ENCODE measurements at regions of chr5 and their contacts with region 1.

Region 1: DNA sequence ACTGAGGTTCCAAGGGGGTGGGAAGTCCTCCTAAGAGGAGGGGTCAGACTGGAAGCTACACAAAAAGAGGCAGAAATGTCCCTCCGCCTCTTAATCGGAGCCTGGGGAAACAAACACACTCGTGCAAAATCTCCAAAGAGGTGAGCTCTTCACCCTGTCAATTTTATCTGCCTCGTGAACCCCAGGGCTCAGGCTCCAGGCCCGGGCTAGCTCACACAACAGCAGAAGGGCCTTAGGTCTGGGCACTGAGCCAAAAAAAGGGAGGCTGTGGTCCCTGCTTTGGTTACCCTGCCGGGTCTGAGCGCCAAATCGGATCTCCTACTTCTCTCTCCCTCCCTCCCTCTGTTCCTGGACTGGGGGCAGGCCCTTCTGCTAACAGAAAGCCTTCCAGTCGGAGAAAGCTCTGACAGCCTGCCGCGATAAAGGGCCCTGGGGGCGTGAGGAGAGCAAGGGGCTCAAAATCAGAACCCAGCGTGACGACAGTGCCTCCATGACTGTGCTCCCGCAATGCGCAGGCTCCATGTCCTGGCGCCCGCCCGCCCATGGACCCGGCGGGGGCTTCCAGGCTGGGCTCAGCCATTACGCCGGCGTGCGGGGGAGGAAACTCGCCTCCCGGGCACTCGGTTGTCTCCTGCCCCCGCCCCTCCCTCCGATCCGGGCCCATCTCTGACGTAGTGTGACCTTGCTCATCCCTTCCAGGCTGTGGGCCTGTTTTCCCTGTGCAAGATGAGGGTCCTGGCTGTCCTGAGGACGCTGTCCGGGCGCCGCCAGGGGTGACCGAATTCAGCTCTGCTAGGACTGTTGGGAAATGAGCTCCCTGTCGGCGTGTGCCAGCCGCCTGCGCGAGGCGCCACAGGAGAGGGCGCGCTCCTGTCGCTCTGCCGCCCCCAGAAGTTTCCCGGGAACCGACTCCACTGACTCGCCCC is 865 bp upstream of the SLC22A4 start:
- DNase-seq: peak; percentile 95
- H3K4me3 ChIP-seq: peak overlapping the region; percentile 31 to 61 (median 58)
- H3K27ac ChIP-seq: peak overlapping the region; percentile 92 to 100 (median 98)
- H3K4me1 ChIP-seq: peaks cover 0 to 27% (median 22%) of the 10 kb centered on the region in 4 donors
- H3K27me3 ChIP-seq: no peaks in the 10 kb centered on the region
- CTCF ChIP-seq: no peak
- EP300 ChIP-seq: peak in 1 of 4 donors; percentile 37
- POLR2A ChIP-seq: peak in 1 of 2 donors; percentile 34

Region 2: DNA sequence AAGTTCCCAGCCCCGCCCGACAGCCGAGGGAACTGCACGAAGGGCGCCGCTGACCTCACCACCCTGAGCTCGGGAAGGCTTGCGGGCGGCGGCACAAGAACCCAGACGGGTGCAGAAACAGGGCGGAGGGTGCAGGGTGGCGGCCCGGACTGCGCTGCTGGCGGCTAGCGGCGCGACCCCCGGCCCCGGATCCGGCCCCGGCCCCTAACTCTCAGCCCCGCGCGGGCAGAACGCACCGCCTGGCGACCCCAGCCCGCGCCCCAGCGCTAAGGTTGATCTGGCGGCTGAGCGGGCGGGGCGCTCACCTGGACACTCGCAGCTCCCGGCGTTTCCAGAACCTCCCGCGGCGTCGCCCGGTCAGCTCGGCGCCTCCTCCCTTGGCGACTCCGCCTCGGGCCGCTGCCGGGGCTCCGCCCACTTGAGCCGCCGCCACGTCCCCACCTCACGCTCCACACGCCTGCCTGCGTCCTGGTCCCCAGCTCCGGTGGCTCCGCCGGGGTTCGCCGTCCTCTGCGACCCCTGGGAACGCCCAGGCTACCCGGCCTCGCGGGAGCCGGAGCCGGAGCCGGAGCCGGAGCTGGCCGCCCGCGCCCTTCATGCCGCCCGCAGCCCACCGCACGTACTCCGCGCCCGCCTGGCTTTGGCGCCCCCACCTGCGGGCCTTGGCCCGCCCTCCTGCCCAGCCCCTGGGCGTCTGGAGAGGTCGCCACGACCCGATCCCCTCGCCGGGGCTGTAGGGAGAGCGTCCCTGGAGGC is 65.7 kb before region 1 on chr5 and contains the start of gene P4HA2:
- intact Hi-C with region 1: loop called (anchors 5 kb)
- DNase-seq: peak; percentile 93
- H3K4me3 ChIP-seq: peak within 1 kb of the TSS; percentile 46 to 78 (median 74)
- H3K27ac ChIP-seq: peak within 1 kb of the TSS; percentile 87 to 92 (median 91)
- H3K4me1 ChIP-seq: peaks cover 0 to 52% (median 50%) of the 10 kb centered on the region in 4 donors
- H3K27me3 ChIP-seq: no peaks in the 10 kb centered on the region
- CTCF ChIP-seq: peak in 3 of 4 experiments; percentile 19 to 49 (median 25)
- EP300 ChIP-seq: no peak
- POLR2A ChIP-seq: peak in 1 of 2 donors; percentile 73
- total RNA-seq, gene P4HA2: 23.9 to 35.2 (median 28.9) TPM

Region 3: DNA sequence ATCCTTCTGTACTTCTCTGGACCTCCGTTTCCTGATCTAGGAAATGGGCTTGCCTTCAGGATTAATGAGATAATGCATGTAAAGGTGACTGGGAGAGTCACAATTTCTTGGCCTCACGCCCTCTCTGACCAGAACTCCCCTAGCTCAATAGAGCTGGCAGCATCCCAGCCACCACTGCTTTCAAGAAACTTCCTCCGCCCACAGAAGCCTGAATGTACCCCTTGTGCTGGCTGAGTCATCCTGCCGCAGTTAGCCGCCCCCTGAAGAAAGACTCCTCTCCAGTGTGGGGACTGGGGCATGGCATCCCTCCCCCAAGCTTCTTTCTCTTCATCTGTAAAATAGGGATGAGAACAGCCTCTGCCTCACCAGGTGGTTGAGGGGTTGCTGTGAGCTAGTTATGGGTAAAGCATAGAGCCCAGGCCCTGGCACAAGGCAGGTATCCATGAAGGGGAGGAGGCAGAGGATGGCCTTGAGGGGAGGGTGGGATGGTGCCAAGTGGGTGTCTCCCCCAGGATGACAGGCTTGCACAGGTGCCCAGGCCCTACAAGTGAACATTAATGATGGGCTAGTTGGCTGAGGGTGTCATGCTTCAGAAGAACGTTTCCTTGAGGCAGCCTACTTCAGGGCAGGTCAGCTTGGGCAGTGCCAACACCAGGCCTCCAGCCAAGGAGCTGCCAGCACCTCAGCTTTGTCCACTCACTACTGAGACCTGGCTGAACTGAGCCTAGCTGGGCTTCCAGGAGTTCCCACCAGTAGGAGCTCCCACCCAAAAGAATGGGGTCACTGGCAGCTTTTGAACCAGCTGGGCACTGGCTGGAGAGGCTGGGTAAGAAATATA is 32.4 kb before region 1 on chr5:
- intact Hi-C with region 1: loop called (anchors 2 kb)
- DNase-seq: peak; percentile 92
- H3K4me3 ChIP-seq: peak overlapping the region in 2 of 4 donors; percentile 7 to 91
- H3K27ac ChIP-seq: peak overlapping the region; percentile 97 to 99 (median 98)
- H3K4me1 ChIP-seq: peaks cover 0 to 83% (median 80%) of the 10 kb centered on the region in 4 donors
- H3K27me3 ChIP-seq: no peaks in the 10 kb centered on the region
- CTCF ChIP-seq: no peak
- EP300 ChIP-seq: peak in 1 of 4 donors; percentile 30
- POLR2A ChIP-seq: no peak

Region 4: DNA sequence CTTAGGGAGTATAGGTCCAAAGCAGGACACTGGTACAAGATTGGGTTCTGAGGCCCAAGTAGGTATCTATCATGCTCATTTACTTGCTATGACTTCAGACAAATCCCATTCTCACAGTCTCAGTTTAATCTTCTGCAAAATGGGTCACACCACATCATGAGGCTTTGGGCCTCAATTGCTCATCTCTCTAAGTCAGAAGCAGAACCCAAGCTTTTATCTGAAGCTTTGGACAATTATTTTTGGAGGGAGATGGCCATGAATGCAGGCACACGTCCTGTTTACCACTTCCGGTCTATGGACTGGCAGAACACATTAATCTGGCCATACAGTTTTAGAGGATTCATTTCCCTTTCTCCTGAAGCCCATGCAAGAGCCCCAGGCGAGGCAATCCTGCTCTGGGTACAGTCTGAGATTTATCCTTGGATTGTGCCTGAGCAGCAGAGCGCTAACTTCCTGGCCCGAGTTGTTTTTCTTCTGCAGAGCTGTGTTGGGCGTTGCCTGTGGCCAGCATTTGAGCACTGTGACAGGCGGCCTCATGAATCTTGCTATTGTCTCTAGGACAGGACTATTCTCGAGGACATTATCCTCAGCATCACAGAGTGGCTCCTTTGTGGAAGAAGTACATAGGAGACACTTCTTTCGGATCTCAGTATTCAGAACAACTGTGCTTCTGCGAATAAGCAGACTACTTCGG is 17.0 kb after region 1 on chr5:
- intact Hi-C with region 1: no loop called
- DNase-seq: no peak
- H3K4me3 ChIP-seq: no peak overlapping the region
- H3K27ac ChIP-seq: peak overlapping the region in 2 of 4 donors; percentile 17 to 26
- H3K4me1 ChIP-seq: no peaks in the 10 kb centered on the region
- H3K27me3 ChIP-seq: no peaks in the 10 kb centered on the region
- CTCF ChIP-seq: no peak
- EP300 ChIP-seq: no peak
- POLR2A ChIP-seq: no peak

Region 5: GRCh38 chr5:132369474-132370180 is 76.3 kb after region 1 on chr5 and contains the start of gene SLC22A5:
- intact Hi-C with region 1: loop called (anchors 1 kb)
- DNase-seq: peak; percentile 74
- H3K4me3 ChIP-seq: peak within 1 kb of the TSS; percentile 60 to 80 (median 76)
- H3K27ac ChIP-seq: peak within 1 kb of the TSS; percentile 83 to 89 (median 87)
- H3K4me1 ChIP-seq: peaks cover 0 to 41% (median 27%) of the 10 kb centered on the region in 4 donors
- H3K27me3 ChIP-seq: no peaks in the 10 kb centered on the region
- CTCF ChIP-seq: no peak
- EP300 ChIP-seq: no peak
- POLR2A ChIP-seq: peak in 1 of 2 donors; percentile 22
- total RNA-seq, gene SLC22A5: 3.6 to 9.9 (median 6.3) TPM

Region 6: GRCh38 chr5:132490486-132491367 is 197.4 kb after region 1 on chr5 and contains the start of gene IRF1:
- intact Hi-C with region 1: loop called (anchors 10 kb)
- DNase-seq: peak; percentile 98
- H3K4me3 ChIP-seq: peak within 1 kb of the TSS; percentile 77 to 92 (median 86)
- H3K27ac ChIP-seq: peak within 1 kb of the TSS; percentile 98 to 100 (median 98)
- H3K4me1 ChIP-seq: peaks cover 0 to 70% (median 59%) of the 10 kb centered on the region in 4 donors
- H3K27me3 ChIP-seq: no peaks in the 10 kb centered on the region
- CTCF ChIP-seq: no peak
- EP300 ChIP-seq: peak in 1 of 4 donors; percentile 82
- POLR2A ChIP-seq: peak; percentile 87 to 95
- total RNA-seq, gene IRF1: 15.3 to 124 (median 22.7) TPM